ENCODE measurements at regions of chr2 and their contacts with region 1.

Region 1: DNA sequence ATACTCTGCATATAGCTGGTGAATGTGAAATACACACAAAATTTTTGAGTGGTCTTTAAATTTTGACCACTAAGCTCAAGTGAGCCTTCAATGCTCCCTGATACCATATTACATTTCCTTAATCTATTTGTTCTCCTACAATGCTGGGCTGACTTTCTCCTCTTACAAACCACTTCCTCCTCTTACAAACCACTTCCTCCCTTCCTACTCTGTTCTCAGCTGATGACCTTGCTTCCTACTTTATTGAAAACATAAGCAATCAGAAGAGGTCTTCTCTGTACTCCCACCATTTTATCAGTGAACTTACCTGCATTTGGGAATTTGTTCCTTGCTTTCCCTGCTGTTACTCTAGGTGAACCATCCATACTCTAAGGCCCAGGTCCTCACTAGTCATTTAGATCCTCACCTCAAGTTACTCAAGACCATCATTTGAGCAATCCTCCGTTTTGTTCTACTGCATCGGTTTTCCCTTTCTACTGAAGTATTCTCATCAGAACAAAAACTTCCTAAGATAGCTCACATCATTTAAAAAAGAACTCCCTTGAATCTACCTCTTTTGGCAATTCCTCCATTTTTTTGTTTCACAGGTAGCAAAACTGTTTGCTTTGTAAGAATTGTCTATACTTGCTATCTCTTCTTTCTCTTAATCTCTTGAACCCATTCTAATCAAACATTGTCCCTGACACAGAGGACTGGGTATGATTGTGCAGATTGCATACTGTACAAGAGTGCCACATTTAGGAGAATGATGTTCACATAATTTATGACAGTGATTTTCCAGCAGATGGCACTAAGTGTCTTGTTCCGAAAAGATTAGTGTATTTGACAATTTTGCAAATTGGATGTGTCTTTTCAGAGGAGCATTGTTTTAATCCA is 96.5 kb downstream of the EPB41L5 start:
- H3K4me3 Mint-ChIP-seq: no peak overlapping the region
- H3K27ac Mint-ChIP-seq: no peak overlapping the region
- H3K4me1 Mint-ChIP-seq: peaks cover 32% of the 10 kb centered on the region
- H3K27me3 Mint-ChIP-seq: peaks cover 24% of the 10 kb centered on the region

Region 2: GRCh38 chr2:119759451-119760236 is 349.8 kb before region 1 on chr2 and contains the start of gene PTPN4:
- intact Hi-C with region 1: loop called (anchors 10 kb)
- H3K4me3 Mint-ChIP-seq: peak within 1 kb of the TSS; percentile 85
- H3K27ac Mint-ChIP-seq: peak within 1 kb of the TSS; percentile 91
- H3K4me1 Mint-ChIP-seq: peaks cover 24% of the 10 kb centered on the region
- H3K27me3 Mint-ChIP-seq: no peaks in the 10 kb centered on the region

Region 3: DNA sequence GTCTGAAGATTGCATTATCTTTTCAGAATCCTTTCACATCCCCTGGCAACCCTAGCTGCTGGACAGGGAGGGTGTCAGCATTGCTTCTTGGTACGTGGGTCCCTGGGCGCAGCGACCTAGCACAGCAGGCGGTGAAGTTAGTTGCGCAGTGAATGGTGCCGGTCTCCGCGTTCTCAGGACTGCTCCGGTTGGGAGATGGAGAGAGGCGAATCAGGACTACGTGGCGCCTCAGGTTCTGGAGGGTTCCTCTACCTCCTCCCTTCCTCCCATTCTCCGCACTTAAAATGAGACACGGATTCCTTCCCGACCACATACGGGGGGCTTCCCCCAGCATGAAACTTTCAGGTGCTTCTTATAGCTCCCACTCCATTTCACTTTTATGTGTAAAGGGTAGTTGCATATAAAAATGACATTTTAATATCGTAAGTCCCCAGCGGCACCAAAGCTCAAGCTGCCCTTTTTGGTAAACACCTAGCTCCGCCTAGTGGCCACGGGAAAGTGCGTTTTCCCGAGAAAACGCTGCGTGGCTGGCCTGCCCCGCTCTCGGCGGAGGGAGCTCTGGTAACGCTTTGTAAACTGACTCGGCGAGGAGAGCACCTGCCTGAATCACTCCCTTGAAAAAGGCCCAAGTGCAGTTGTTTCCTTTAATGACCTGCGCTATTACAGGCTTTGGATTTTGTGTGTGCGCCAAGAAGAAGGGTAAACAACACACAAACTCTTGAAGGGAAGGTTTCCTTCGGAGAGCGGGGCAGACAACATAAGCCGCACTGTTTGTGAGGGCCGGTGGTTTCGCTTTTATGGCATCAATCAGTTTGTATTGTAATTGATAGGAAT is 203.7 kb after region 1 on chr2:
- intact Hi-C with region 1: loop called (anchors 2 kb)
- H3K4me3 Mint-ChIP-seq: peak overlapping the region; percentile 50
- H3K27ac Mint-ChIP-seq: no peak overlapping the region
- H3K4me1 Mint-ChIP-seq: peaks cover 11% of the 10 kb centered on the region
- H3K27me3 Mint-ChIP-seq: peaks cover 42% of the 10 kb centered on the region

Measured in dendritic cell treated with granulocyte-macrophage colony-stimulating factor and Interleukin-4, amounts not matched to agents 40 ng/mL and 50 ng/mL, for 4 days (primary cell).